ENCODE measurements at regions of chr22 and their contacts with region 1.

Region 1: DNA sequence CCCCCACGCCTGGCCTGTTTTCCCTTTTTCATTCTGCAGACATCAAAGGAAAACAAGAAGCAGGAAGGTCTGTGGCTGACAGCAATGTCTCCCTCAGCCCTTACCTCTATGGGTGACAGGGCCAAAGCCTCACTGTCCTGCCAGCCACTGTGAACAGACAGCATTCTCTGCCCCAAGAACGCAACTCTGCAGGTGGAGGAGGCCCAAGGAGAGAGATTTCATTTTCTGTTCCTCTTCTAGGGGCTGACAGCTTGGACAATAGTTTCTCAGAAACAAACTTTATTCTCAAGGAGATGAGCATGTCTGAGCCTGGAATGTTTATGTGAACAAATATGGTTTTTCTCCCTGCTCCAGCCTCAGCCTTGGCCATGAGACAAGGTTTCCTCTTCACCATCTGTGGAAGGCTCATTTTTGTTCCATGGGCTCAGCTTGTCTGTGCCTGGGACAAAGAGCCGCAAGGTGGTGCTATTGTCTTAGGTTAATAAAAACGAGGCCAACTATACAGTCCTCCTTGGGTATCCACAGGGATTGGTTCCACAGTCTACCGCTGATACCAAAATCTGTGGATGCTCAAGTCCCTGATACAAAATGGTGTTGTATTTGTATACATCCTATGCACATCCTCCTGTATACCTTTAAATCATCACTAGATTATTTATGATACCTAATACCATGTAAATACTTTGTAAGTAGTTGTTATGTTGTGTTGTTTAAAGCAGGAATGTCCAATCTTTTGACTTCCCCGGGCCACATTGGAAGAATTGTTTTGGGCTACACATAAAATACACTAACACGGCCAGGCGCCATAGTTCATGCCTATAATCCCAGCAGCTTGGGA is 5.8 kb downstream of the PIWIL3 start:
- DNase-seq: peak; percentile 74
- H3K4me3 ChIP-seq: no peak overlapping the region
- H3K27ac ChIP-seq: no peak overlapping the region
- H3K4me1 ChIP-seq: no peaks in the 10 kb centered on the region
- H3K27me3 ChIP-seq: peaks cover 25% of the 10 kb centered on the region
- CTCF ChIP-seq: peak; percentile 66 to 79 (median 68)
- EP300 ChIP-seq: no peak
- POLR2A ChIP-seq: no peak

Region 2: GRCh38 chr22:24728790-24729637 is 39.7 kb before region 1 on chr22:
- in situ Hi-C with region 1: no loop called
- intact Hi-C with region 1: no loop called
- DNase-seq: no peak
- H3K4me3 ChIP-seq: no peak overlapping the region
- H3K27ac ChIP-seq: no peak overlapping the region
- H3K4me1 ChIP-seq: peaks cover 0 to 10% (median 1%) of the 10 kb centered on the region in 4 donors
- H3K27me3 ChIP-seq: peaks cover 43% of the 10 kb centered on the region
- CTCF ChIP-seq: no peak
- EP300 ChIP-seq: no peak
- POLR2A ChIP-seq: no peak

Region 3: DNA sequence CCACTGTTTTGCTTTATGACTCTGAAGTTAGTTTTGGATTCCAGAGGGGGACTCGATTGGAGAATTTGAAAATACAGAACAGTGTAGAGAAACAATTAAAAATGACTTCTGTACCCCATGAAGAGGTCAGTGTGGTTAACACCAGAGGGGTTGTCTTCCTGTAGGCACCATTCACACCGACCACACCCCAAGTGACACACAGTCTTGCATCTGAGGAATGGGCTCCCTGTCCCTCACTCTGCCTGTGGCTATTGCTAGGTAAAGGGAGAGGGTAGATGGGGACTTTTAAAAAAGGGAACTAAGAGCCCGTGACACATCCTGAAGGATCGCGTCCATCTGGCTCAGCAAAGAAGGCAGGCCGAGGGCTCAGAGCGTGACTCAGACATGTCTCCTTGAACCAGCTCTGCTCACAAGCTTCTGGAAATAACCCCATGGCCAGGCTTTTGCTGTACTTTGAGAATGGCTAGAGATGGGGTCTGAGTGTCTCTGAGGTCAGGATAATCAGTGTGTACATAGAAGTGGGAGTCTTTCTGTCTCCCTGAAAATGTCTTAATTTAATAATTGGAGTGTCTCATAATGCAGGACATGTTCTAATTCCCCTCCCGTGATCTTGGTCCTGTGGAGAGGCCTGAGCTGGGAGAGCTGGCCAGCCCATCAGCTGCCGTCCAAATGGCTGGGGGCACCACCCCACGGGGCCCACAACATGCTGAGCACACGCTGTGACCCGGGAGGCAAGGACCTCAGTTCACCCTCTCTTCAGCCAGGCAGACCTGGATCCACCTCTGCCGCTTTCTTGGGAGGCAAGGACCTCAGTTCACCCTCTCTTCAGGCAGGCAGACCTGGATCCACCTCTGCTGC is 76.5 kb after region 1 on chr22:
- in situ Hi-C with region 1: loop called in 3 of 4 experiments (anchors 5 to 10 kb)
- intact Hi-C with region 1: loop called (anchors 5 kb)
- DNase-seq: no peak
- H3K4me3 ChIP-seq: no peak overlapping the region
- H3K27ac ChIP-seq: no peak overlapping the region
- H3K4me1 ChIP-seq: peaks cover 0 to 7% (median 1%) of the 10 kb centered on the region in 4 donors
- H3K27me3 ChIP-seq: no peaks in the 10 kb centered on the region
- CTCF ChIP-seq: no peak
- EP300 ChIP-seq: no peak
- POLR2A ChIP-seq: no peak

Region 4: DNA sequence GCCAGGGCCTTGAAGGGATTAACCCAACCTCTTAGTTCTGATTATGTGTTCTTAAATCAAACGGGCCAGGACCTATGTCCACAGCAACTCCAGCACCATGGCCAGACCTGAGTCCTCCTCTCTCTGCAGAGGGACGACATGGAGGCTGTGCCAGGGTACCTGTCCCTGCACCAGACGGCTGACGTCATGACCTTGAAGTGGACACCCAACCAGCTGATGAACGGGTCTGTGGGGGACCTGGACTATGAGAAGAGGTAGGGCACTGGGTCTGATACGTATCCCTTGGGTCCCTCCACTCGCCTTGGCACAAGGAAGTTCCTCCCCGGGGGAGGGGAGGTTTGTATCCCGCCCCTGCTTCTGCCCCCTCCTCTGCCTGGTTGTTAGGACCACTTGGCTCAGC is 90.8 kb after region 1 on chr22:
- in situ Hi-C with region 1: loop called in 1 of 4 experiments (anchors 10 kb)
- intact Hi-C with region 1: no loop called
- DNase-seq: no peak
- H3K4me3 ChIP-seq: no peak overlapping the region
- H3K27ac ChIP-seq: no peak overlapping the region
- H3K4me1 ChIP-seq: no peaks in the 10 kb centered on the region
- H3K27me3 ChIP-seq: no peaks in the 10 kb centered on the region
- CTCF ChIP-seq: no peak
- EP300 ChIP-seq: no peak
- POLR2A ChIP-seq: no peak

Region 5: GRCh38 chr22:25048659-25049647 is 280.2 kb after region 1 on chr22:
- in situ Hi-C with region 1: loop called in 2 of 4 experiments (anchors 10 to 25 kb)
- intact Hi-C with region 1: no loop called
- DNase-seq: peak; percentile 78
- H3K4me3 ChIP-seq: no peak overlapping the region
- H3K27ac ChIP-seq: peak overlapping the region in 1 of 4 donors; percentile 7
- H3K4me1 ChIP-seq: peaks cover 0 to 25% (median 9%) of the 10 kb centered on the region in 4 donors
- H3K27me3 ChIP-seq: no peaks in the 10 kb centered on the region
- CTCF ChIP-seq: peak; percentile 84 to 90 (median 88)
- EP300 ChIP-seq: no peak
- POLR2A ChIP-seq: no peak